HEK293 (cell line): ENCODE measurements at regions of chr11 and their contacts with region 1.

Region 1: GRCh38 chr11:17389211-17389956 is 925 bp upstream of the KCNJ11 start:
- H3K4me3 ChIP-seq: peak overlapping the region; percentile 65
- H3K27ac ChIP-seq: peak overlapping the region; percentile 56; the same call in 1 of the 2 replicates
- H3K4me1 ChIP-seq: no peaks in the 10 kb centered on the region
- CTCF ChIP-seq: no peak

Region 2: GRCh38 chr11:17504330-17505107 is 115.1 kb after region 1 on chr11:
- CTCF ChIA-PET with region 1: interaction called, 318 read pairs
- POLR2A ChIA-PET with region 1: interaction called, 3 read pairs
- H3K4me3 ChIP-seq: no peak overlapping the region
- H3K27ac ChIP-seq: no peak overlapping the region
- H3K4me1 ChIP-seq: no peaks in the 10 kb centered on the region
- CTCF ChIP-seq: peak; percentile 72

Region 3: GRCh38 chr11:17650127-17650911 is 260.9 kb after region 1 on chr11:
- CTCF ChIA-PET with region 1: no interaction called
- POLR2A ChIA-PET with region 1: no interaction called
- H3K4me3 ChIP-seq: no peak overlapping the region
- H3K27ac ChIP-seq: no peak overlapping the region
- H3K4me1 ChIP-seq: no peaks in the 10 kb centered on the region
- CTCF ChIP-seq: no peak